Left cardiac atrium (tissue), 4 donors: ENCODE measurements at regions of chr5 and their contacts with region 1.

Region 1: GRCh38 chr5:16160706-16161105 is 18.9 kb downstream of the MARCHF11 start:
- DNase-seq: no peak
- ATAC-seq: peak; percentile 67 to 82

Region 2: GRCh38 chr5:16456103-16456832 is 295.6 kb after region 1 on chr5:
- intact Hi-C with region 1: loop called in 1 of 2 experiments (anchors 5 kb)
- DNase-seq: peak; percentile 39
- ATAC-seq: peak; percentile 48 to 89

Region 3: DNA sequence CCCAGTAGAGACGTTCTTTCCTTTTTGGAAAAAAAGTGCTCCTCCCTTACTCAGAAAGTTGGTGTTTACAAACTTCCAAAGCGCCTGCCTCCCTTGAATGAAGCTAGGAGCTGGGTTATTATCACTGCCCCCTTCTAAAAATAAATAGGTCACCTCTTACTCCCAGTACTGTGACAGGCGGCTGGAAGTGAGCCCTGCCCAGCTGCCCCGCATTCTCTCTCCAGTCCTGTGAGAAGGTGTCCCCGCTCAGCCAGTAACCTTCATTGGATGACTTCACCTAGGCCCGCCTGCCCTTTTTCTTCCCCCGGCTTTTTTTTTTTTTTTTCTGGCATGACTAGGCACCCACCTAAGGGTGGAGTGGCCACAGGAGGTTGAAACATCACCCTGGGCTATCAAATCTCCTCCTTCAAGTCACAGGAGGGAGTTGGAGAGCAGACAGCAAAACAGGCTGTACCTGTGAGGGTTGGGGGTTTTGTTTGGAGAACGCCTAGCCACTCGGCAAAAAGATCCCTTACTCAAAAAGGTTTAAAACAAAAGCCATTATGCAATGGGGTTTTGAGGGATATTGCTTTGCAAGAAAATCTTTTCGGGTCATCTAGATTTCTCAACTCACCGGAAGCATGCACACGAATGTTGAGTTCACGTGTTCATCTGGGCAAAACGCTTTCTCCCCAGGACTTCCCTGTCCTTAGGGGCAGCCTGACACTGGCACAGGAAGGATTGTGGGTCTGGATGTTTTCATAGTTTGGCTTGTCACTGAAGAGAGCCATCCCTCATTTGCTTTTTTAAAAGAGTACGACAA is 348.2 kb after region 1 on chr5:
- intact Hi-C with region 1: no loop called
- DNase-seq: peak; percentile 70
- ATAC-seq: peak; percentile 93 to 96

Region 4: DNA sequence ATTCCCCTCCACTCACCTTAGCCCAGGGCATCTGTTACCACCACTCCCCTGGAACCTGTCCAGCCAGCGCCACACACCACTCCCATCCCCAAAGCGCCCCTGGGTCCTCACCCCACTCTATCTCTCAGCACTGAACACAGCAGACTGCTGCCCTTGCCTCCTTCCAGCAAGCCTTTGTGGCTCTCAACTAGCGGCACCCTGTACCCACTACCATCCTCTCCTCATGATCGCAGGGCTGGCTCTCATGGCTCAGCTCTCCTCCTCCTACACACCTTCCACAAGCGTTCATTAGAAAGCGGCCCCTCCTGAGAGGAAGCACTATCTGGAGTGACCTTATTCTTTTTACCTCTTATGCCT is 1043.4 kb after region 1 on chr5:
- intact Hi-C with region 1: loop called in 1 of 2 experiments (anchors 10 kb)
- DNase-seq: no peak
- ATAC-seq: no peak